ENCODE measurements at regions of chr12 and their contacts with region 1.

Region 1: GRCh38 chr12:50016501-50017475 is 8.5 kb downstream of the RACGAP1 start:
- DNase-seq: no peak
- H3K4me3 ChIP-seq: no peak overlapping the region
- H3K27ac ChIP-seq: no peak overlapping the region
- H3K4me1 ChIP-seq: no peaks in the 10 kb centered on the region
- H3K27me3 ChIP-seq: no peaks in the 10 kb centered on the region
- CTCF ChIP-seq: no peak
- POLR2A ChIP-seq: no peak

Region 2: GRCh38 chr12:49974231-49974675 is 42.5 kb before region 1 on chr12:
- intact Hi-C with region 1: loop called (anchors 5 kb)
- DNase-seq: no peak
- H3K4me3 ChIP-seq: no peak overlapping the region
- H3K27ac ChIP-seq: no peak overlapping the region
- H3K4me1 ChIP-seq: no peaks in the 10 kb centered on the region
- H3K27me3 ChIP-seq: no peaks in the 10 kb centered on the region
- CTCF ChIP-seq: peak in 2 of 4 experiments; percentile 35 to 51
- POLR2A ChIP-seq: no peak

Measured in prostate gland (tissue), 2 donors.